PC-9 (cell line): ENCODE measurements at regions of chr11 and their contacts with region 1.

Region 1: GRCh38 chr11:77994412-77995362 is at the start of gene INTS4:
- DNase-seq: peak; percentile 100
- H3K4me3 ChIP-seq: peak within 1 kb of the TSS; percentile 76
- H3K27ac ChIP-seq: peak within 1 kb of the TSS; percentile 75
- H3K4me1 ChIP-seq: peaks cover 20% of the 10 kb centered on the region
- H3K27me3 ChIP-seq: no peaks in the 10 kb centered on the region
- CTCF ChIP-seq: no peak
- total RNA-seq, gene INTS4: 43.9 and 53.8 TPM in 2 replicates

Region 2: DNA sequence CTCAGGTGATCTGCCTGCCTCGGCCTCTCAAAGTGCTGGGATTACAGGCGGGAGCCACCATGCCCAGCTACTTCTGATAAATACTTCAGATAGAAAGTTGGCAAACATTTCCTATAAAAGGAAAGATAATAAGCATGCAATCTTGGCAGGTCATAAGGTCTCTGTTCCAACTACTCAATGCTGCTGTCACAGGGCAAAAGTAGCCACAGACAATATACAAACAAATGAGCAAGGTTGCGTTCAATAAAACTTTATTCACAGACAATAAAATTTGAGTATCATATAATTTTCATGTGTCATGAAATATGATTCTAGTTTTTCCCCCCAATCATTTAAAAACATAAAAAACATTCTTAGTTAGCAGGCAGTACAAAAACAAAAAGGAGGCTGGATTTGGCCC is 304.0 kb before region 1 on chr11:
- CTCF ChIA-PET with region 1: no interaction called
- POLR2A ChIA-PET with region 1: interaction called, 18 read pairs
- intact Hi-C with region 1: no loop called
- DNase-seq: no peak
- H3K4me3 ChIP-seq: no peak overlapping the region
- H3K27ac ChIP-seq: no peak overlapping the region
- H3K4me1 ChIP-seq: no peaks in the 10 kb centered on the region
- H3K27me3 ChIP-seq: no peaks in the 10 kb centered on the region
- CTCF ChIP-seq: no peak

Region 3: DNA sequence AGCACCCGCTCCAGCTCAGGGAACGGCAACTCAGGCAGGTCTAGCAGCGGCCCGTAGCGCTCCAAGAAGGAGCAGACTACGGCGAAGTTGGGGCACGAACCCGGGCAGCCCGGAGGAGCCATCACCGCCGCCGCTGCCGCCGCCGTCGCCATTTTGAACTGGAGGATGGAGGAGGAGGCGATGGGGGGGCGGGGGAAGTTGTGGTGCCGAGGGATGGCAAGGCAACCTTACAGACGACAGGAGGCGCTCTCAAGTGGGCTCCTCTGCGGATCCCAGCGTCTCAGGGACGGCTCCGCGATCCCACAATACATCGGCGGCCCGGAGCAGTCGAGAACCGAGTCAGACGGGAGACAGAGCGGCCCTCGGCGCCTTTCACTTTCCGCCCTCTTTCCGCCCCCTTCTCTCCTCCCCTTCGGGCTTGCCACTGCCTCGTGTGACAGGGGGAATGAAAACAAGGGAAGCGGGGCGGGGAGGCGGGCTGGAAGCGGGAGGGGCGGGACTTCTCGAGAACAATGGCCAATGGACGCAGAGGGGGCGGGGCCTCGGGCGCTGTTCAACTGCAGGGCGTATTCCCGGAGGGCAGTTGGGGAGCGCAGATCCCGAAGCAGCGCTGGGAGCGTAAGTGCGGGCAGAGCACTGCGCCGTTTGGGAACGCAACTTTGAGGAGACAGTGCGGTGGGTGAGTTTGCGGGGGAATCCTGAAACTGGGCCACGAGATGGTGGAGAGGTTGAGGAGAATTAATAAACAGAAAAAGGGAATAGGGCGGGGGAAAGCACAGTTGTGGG is 173.9 kb before region 1 on chr11 and contains the starts of genes AAMDC and RSF1:
- CTCF ChIA-PET with region 1: interaction called, 5 read pairs
- POLR2A ChIA-PET with region 1: no interaction called
- intact Hi-C with region 1: loop called (anchors 1 kb)
- DNase-seq: peak; percentile 97 to 99
- H3K4me3 ChIP-seq: peak within 1 kb of the TSS; percentile 89
- H3K27ac ChIP-seq: peak within 1 kb of the TSS; percentile 55
- H3K4me1 ChIP-seq: peaks cover 38% of the 10 kb centered on the region
- H3K27me3 ChIP-seq: no peaks in the 10 kb centered on the region
- CTCF ChIP-seq: peak; percentile 85
- total RNA-seq, gene AAMDC: 39.8 and 59.3 TPM in 2 replicates
- total RNA-seq, gene RSF1: 110 and 124 TPM in 2 replicates

Region 4: GRCh38 chr11:78010310-78010709 is 15.6 kb after region 1 on chr11:
- CTCF ChIA-PET with region 1: no interaction called
- POLR2A ChIA-PET with region 1: no interaction called
- intact Hi-C with region 1: no loop called
- DNase-seq: no peak
- H3K4me3 ChIP-seq: no peak overlapping the region
- H3K27ac ChIP-seq: no peak overlapping the region
- H3K4me1 ChIP-seq: no peaks in the 10 kb centered on the region
- H3K27me3 ChIP-seq: no peaks in the 10 kb centered on the region
- CTCF ChIP-seq: no peak

Region 5: DNA sequence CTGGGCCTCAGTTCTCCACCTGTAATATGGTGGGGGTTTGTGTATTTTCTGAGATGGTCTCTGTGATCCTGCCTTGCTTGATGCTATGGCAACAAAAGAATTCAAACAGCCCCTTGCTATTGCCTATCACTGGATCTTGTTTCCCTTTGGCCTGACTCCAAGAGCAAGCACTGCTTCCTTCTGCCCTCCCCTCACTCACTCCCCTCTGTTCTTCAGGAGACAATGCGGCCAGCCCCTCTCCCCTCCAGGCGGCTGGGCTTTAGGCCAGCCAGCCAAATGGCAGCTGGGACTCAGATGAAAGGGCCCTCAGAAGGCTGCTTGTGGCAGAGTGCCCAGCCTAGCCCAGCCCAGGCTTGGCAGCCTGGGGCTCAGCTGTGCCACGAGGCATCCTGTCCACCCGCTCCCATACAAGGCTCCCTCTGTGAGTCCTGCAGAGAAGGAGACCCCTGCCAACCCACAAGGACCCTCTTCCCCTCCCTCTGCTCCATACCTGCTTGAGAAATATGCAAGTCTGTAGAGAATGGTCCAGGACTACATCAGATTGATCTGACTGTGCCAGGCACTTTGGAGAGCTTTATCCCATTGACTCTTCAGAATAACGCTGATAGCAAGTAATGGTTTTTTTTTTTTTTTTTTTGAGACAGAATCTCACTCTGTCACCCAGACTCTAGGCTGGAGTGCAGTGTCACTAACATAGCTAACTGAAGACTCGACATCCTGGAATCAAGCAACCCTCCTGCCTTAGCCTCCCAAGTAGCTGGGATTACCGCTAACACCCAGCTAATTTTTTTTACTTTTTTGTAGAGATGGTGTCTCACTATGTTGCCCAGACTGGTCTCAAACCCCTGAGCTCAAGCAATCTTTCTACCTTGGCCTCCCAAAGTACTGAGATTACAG is 36.0 kb after region 1 on chr11:
- CTCF ChIA-PET with region 1: no interaction called
- POLR2A ChIA-PET with region 1: interaction called, 17 read pairs
- intact Hi-C with region 1: loop called (anchors 2 kb)
- DNase-seq: peak; percentile 89 to 92
- H3K4me3 ChIP-seq: no peak overlapping the region
- H3K27ac ChIP-seq: 0 out of 2 replicates have a peak overlapping the region, but pooled peaks have one; percentile 11
- H3K4me1 ChIP-seq: peaks cover 55% of the 10 kb centered on the region
- H3K27me3 ChIP-seq: no peaks in the 10 kb centered on the region
- CTCF ChIP-seq: no peak

Region 6: DNA sequence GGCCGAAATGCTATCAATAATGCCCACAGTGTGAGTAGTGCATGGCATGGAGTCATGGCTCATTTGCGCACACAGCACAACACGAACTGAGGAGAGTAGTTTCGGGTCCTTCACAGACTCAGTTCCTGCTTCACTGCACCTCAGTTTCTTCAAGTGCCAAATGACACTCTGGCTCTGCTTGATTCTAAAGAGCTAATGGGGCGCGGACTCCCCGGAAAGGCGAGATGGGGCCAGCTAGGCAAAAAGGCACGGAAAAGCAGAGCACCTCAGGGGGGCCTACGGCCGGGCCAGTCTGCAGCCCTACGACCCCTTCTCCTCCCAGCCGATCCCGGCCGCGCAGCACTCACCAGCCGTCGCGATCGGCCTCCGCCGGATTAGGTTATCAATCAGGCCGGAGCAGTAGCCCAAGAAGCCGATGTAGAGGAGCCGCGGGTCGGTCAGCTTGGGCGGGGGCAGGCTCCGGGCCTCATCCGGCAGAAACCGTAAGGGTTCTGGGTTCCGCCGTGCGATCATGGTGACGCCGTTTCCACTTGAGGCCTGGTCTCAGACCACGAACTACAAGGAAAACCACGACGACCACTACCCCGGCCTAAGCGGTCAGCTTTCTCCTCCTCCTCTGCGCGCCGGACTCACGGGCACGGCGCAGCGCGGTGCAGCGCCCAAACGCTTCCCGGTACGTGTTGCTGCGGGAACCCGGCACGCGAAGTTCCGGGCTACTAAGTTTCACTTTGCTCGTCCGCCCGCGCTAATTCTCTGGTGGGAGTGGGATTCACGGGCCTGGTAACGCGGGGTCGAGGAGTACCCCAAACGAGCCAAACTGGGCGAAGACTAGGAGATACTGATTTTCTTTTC is 84.8 kb after region 1 on chr11 and contains the start of gene NDUFC2:
- CTCF ChIA-PET with region 1: interaction called, 3 read pairs
- POLR2A ChIA-PET with region 1: interaction called, 4 read pairs
- intact Hi-C with region 1: loop called (anchors 1 kb)
- DNase-seq: peak; percentile 73 to 82
- H3K4me3 ChIP-seq: peak within 1 kb of the TSS; percentile 89
- H3K27ac ChIP-seq: peak within 1 kb of the TSS; percentile 46
- H3K4me1 ChIP-seq: peaks cover 35% of the 10 kb centered on the region
- H3K27me3 ChIP-seq: no peaks in the 10 kb centered on the region
- CTCF ChIP-seq: 0 out of 2 replicates have a peak, but pooled peaks have one; percentile 14
- total RNA-seq, gene NDUFC2: 380 and 394 TPM in 2 replicates